CD8-positive, alpha-beta T cell (primary cell): ENCODE measurements at regions of chr2 and their contacts with region 1.

Region 1: DNA sequence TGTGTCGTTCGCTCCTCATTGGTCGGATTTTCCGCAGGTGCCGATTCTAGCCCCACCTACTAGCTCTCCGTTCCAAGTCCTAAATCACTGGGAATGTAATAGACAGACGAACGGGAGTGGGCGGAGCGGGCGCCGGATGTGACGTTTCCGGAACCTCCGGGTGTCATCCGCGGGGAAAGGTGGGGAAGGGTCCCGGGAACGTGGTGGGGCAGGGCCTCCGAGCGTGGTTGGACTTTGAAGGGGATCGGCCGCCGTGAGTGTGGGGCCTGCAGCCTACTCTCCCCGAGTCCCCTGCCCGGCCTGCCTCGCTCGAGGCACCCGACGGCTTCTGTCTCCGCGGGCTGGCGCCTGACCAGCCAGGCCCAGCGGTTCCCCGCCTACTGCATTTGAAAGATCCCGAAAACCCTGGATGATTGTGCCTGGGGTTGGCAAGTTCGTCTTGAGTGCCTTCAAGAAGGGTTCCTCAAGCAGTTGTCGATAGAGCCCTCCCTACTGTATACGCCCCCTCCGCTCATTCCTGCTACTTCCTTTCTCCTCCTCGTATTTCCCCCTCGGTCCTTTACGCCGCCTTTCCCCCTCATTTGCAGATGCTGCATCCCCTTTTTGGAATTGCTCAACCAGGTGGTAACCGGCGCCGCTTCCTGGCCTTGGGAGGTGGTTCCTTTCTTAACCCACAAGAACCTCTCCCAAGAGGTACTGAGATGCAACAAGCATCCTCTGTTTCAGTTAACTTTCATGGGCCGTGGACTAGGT is at the start of gene STAMBP:
- DNase-seq: peak; percentile 68 to 97 (median 91)
- ATAC-seq: peak; percentile 83
- H3K4me3 ChIP-seq: peak within 1 kb of the TSS; percentile 73 to 78
- H3K4me3 Mint-ChIP-seq: peak within 1 kb of the TSS; percentile 97
- H3K27ac ChIP-seq: peak within 1 kb of the TSS; percentile 74 to 96
- H3K27ac Mint-ChIP-seq: peak within 1 kb of the TSS; percentile 99
- H3K4me1 ChIP-seq: peaks cover 33% of the 10 kb centered on the region
- H3K4me1 Mint-ChIP-seq: peaks cover 53% of the 10 kb centered on the region
- H3K27me3 ChIP-seq: no peaks in the 10 kb centered on the region
- H3K27me3 Mint-ChIP-seq: no peaks in the 10 kb centered on the region
- CTCF ChIP-seq: no peak
- total RNA-seq, gene STAMBP: 8.6 to 9.2 TPM

Region 2: GRCh38 chr2:73566288-73566878 is 262.6 kb before region 1 on chr2:
- CTCF ChIA-PET with region 1: no interaction called
- POLR2A ChIA-PET with region 1: no interaction called
- intact Hi-C with region 1: no loop called
- DNase-seq: no peak
- ATAC-seq: no peak
- H3K4me3 ChIP-seq: no peak overlapping the region
- H3K4me3 Mint-ChIP-seq: no peak overlapping the region
- H3K27ac ChIP-seq: no peak overlapping the region
- H3K27ac Mint-ChIP-seq: no peak overlapping the region
- H3K4me1 ChIP-seq: no peaks in the 10 kb centered on the region
- H3K4me1 Mint-ChIP-seq: no peaks in the 10 kb centered on the region
- H3K27me3 ChIP-seq: no peaks in the 10 kb centered on the region
- H3K27me3 Mint-ChIP-seq: no peaks in the 10 kb centered on the region
- CTCF ChIP-seq: no peak

Region 3: GRCh38 chr2:73851274-73851673 is 22.3 kb after region 1 on chr2:
- CTCF ChIA-PET with region 1: interaction called, 14 read pairs
- POLR2A ChIA-PET with region 1: no interaction called
- intact Hi-C with region 1: no loop called
- DNase-seq: peak in 2 of 9 experiments; percentile 12 to 24
- ATAC-seq: no peak
- H3K4me3 ChIP-seq: no peak overlapping the region
- H3K4me3 Mint-ChIP-seq: no peak overlapping the region
- H3K27ac ChIP-seq: no peak overlapping the region
- H3K27ac Mint-ChIP-seq: no peak overlapping the region
- H3K4me1 ChIP-seq: no peaks in the 10 kb centered on the region
- H3K4me1 Mint-ChIP-seq: no peaks in the 10 kb centered on the region
- H3K27me3 ChIP-seq: no peaks in the 10 kb centered on the region
- H3K27me3 Mint-ChIP-seq: no peaks in the 10 kb centered on the region
- CTCF ChIP-seq: no peak

Region 4: GRCh38 chr2:73985308-73986084 is 156.5 kb after region 1 on chr2:
- CTCF ChIA-PET with region 1: interaction called, 6 read pairs
- POLR2A ChIA-PET with region 1: interaction called, 4 read pairs
- intact Hi-C with region 1: loop called (anchors 2 kb)
- DNase-seq: peak in 7 of 9 experiments; percentile 45 to 83 (median 61)
- ATAC-seq: peak; percentile 33
- H3K4me3 ChIP-seq: peak overlapping the region; percentile 65 to 72
- H3K4me3 Mint-ChIP-seq: peak overlapping the region; percentile 80
- H3K27ac ChIP-seq: peak overlapping the region; percentile 37 to 71
- H3K27ac Mint-ChIP-seq: peak overlapping the region; percentile 85
- H3K4me1 ChIP-seq: peaks cover 78% of the 10 kb centered on the region
- H3K4me1 Mint-ChIP-seq: peaks cover 79% of the 10 kb centered on the region
- H3K27me3 ChIP-seq: no peaks in the 10 kb centered on the region
- H3K27me3 Mint-ChIP-seq: no peaks in the 10 kb centered on the region
- CTCF ChIP-seq: no peak

Region 5: GRCh38 chr2:74147727-74148456 is 318.9 kb after region 1 on chr2 and contains the start of gene BOLA3:
- CTCF ChIA-PET with region 1: interaction called, 73 read pairs
- POLR2A ChIA-PET with region 1: interaction called, 6 read pairs
- intact Hi-C with region 1: no loop called
- DNase-seq: peak; percentile 58 to 90 (median 82)
- ATAC-seq: peak; percentile 90
- H3K4me3 ChIP-seq: peak within 1 kb of the TSS; percentile 51 to 73
- H3K4me3 Mint-ChIP-seq: no peak within 1 kb of the TSS
- H3K27ac ChIP-seq: peak within 1 kb of the TSS; percentile 21 to 66
- H3K27ac Mint-ChIP-seq: no peak within 1 kb of the TSS
- H3K4me1 ChIP-seq: peaks cover 12% of the 10 kb centered on the region
- H3K4me1 Mint-ChIP-seq: peaks cover 4% of the 10 kb centered on the region
- H3K27me3 ChIP-seq: no peaks in the 10 kb centered on the region
- H3K27me3 Mint-ChIP-seq: no peaks in the 10 kb centered on the region
- CTCF ChIP-seq: peak; percentile 66
- total RNA-seq, gene BOLA3: 9.9 to 10.1 TPM

Region 6: GRCh38 chr2:74421221-74421870 is 592.4 kb after region 1 on chr2 and contains the starts of genes C2orf81 and WDR54:
- CTCF ChIA-PET with region 1: no interaction called
- POLR2A ChIA-PET with region 1: no interaction called
- intact Hi-C with region 1: loop called in 1 of 2 experiments (anchors 1 kb)
- DNase-seq: peak; percentile 90 to 98 (median 95)
- ATAC-seq: peak; percentile 88
- H3K4me3 ChIP-seq: peak within 1 kb of the TSS; percentile 72 to 92
- H3K4me3 Mint-ChIP-seq: peak within 1 kb of the TSS; percentile 98
- H3K27ac ChIP-seq: peak within 1 kb of the TSS; percentile 96 to 97
- H3K27ac Mint-ChIP-seq: peak within 1 kb of the TSS; percentile 96
- H3K4me1 ChIP-seq: peaks cover 20% of the 10 kb centered on the region
- H3K4me1 Mint-ChIP-seq: peaks cover 17% of the 10 kb centered on the region
- H3K27me3 ChIP-seq: no peaks in the 10 kb centered on the region
- H3K27me3 Mint-ChIP-seq: no peaks in the 10 kb centered on the region
- CTCF ChIP-seq: no peak
- total RNA-seq, gene C2orf81: 0.75 to 1.8 TPM
- total RNA-seq, gene WDR54: 18.4 to 19.8 TPM

Region 7: DNA sequence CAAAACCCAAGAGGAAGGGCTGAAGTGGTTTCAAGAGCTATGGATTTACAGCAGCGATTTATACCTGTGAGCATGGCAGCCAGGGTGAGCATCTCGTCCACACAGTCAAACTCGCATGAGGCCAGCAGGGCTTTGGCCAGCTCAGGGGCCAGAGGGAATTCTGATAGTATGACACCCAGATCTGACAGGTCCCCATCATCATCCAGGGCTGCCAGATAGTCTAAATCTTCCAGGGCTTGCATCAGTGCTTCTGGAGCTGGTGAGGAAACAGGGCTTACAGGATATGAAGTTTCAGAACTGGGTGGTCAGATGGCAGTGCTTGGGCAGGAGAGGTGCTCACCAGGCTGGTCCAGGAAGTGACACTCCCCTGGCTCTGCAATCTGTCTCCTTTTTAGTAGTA is 693.5 kb after region 1 on chr2:
- CTCF ChIA-PET with region 1: no interaction called
- POLR2A ChIA-PET with region 1: no interaction called
- intact Hi-C with region 1: no loop called
- DNase-seq: no peak
- ATAC-seq: no peak
- H3K4me3 ChIP-seq: no peak overlapping the region
- H3K4me3 Mint-ChIP-seq: no peak overlapping the region
- H3K27ac ChIP-seq: no peak overlapping the region
- H3K27ac Mint-ChIP-seq: no peak overlapping the region
- H3K4me1 ChIP-seq: no peaks in the 10 kb centered on the region
- H3K4me1 Mint-ChIP-seq: peaks cover 6% of the 10 kb centered on the region
- H3K27me3 ChIP-seq: peaks cover 9 to 13% of the 10 kb centered on the region in 2 experiments
- H3K27me3 Mint-ChIP-seq: peaks cover 30% of the 10 kb centered on the region
- CTCF ChIP-seq: no peak

Region 8: GRCh38 chr2:75311993-75312392 is 1483.0 kb after region 1 on chr2:
- CTCF ChIA-PET with region 1: no interaction called
- POLR2A ChIA-PET with region 1: no interaction called
- intact Hi-C with region 1: no loop called
- DNase-seq: no peak
- ATAC-seq: no peak
- H3K4me3 ChIP-seq: no peak overlapping the region
- H3K4me3 Mint-ChIP-seq: no peak overlapping the region
- H3K27ac ChIP-seq: no peak overlapping the region
- H3K27ac Mint-ChIP-seq: no peak overlapping the region
- H3K4me1 ChIP-seq: no peaks in the 10 kb centered on the region
- H3K4me1 Mint-ChIP-seq: no peaks in the 10 kb centered on the region
- H3K27me3 ChIP-seq: no peaks in the 10 kb centered on the region
- H3K27me3 Mint-ChIP-seq: no peaks in the 10 kb centered on the region
- CTCF ChIP-seq: no peak